Activated CD8-positive, alpha-beta memory T cell treated with anti-CD3 and anti-CD28 coated beads, Interleukin-2, amount 10 ng/mL, durations not matched to agents 7 days and 5 days (primary cell): ENCODE measurements at regions of chr5 and their contacts with region 1.

Region 1: DNA sequence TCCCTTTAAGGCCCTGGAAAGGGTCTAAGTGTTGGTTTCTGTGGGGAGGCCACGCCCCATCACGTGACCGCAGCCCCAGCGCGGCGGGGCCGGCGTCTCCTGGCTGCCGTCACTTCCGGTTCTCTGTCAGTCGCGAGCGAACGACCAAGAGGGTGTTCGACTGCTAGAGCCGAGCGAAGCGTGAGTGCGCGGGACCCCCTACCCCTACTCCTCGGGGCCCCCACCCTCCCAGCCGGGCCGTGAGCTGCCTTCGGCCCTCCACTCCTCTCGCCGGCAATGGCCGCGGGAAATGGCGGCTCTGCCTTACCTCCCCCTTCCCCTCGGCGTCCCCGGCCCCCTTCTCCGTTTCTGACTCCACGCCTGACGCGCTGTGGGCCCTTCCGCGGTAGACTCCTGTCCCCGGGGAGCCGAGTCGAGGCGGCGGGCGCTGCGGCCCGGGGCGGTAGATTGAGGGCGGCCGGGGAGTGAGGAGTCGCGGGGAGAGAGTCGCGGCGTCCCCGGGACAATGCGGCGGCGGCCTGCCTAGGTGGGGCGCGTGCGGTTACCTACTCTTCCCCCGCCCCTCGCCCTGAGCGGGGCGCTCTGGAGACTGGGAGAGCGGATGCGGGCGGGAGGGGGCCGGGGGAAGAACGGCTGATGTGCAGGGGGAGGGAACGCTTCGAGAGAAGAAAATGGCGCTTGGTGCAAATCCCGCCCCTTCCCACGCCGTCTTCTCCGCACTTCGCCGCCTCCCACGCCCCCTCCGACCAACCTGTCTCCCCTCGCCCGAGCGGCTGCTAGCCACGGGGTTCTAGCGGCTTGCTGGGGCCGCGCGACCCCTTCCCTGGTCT is at the start of gene SUB1:
- DNase-seq: peak; percentile 96
- ATAC-seq: peak; percentile 87
- H3K4me3 Mint-ChIP-seq: peak within 1 kb of the TSS; percentile 100
- H3K27ac Mint-ChIP-seq: peak within 1 kb of the TSS; percentile 96
- H3K4me1 Mint-ChIP-seq: peaks cover 70% of the 10 kb centered on the region
- H3K27me3 Mint-ChIP-seq: no peaks in the 10 kb centered on the region
- total RNA-seq, gene SUB1: 525 to 528 TPM

Region 2: GRCh38 chr5:32232441-32233219 is 353.0 kb before region 1 on chr5:
- CTCF ChIA-PET with region 1: interaction called, 11 read pairs
- DNase-seq: peak; percentile 83
- ATAC-seq: peak; percentile 90
- H3K4me3 Mint-ChIP-seq: no peak overlapping the region
- H3K27ac Mint-ChIP-seq: peak overlapping the region; percentile 53
- H3K4me1 Mint-ChIP-seq: peaks cover 3% of the 10 kb centered on the region
- H3K27me3 Mint-ChIP-seq: no peaks in the 10 kb centered on the region

Region 3: DNA sequence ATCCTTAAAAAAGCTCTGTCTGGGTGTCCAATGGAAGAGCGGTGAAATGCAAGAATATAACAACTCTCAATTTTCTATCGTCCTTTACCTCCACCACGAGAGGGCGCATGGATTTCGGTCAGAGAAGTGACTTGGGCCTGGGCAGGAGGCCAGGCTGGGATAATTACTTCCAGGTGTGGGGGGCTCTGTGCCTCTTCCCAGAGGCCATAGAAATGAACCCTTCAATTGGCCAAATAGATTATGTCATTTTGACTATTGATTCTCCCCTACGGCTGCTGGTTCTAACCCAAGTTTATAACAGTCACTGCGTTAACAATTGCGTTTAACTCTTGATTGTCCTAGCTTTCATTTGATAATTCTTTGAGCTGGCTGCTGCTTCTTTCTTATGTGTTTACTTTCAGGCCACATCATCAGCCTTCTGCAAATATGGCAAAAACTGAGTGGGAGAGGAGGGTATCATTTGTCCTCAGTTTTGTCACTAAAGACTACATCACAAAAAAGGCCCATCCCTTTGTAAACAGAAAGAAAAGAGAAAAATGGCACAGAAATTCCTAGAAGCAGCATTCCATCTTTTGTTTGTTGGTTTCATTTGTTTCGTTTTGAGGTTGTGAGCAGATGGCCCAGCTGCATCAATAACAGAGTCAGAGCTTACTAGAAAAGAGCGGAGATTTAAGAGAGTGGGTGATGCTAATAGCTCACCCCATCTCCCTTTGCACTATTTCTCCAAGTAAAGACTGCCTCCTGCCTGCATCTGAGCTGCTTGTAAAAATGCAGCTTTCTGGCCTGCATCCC is 95.7 kb before region 1 on chr5:
- CTCF ChIA-PET with region 1: interaction called, 149 read pairs
- DNase-seq: peak; percentile 79
- ATAC-seq: peak; percentile 64
- H3K4me3 Mint-ChIP-seq: no peak overlapping the region
- H3K27ac Mint-ChIP-seq: no peak overlapping the region
- H3K4me1 Mint-ChIP-seq: peaks cover 2% of the 10 kb centered on the region
- H3K27me3 Mint-ChIP-seq: no peaks in the 10 kb centered on the region

Region 4: DNA sequence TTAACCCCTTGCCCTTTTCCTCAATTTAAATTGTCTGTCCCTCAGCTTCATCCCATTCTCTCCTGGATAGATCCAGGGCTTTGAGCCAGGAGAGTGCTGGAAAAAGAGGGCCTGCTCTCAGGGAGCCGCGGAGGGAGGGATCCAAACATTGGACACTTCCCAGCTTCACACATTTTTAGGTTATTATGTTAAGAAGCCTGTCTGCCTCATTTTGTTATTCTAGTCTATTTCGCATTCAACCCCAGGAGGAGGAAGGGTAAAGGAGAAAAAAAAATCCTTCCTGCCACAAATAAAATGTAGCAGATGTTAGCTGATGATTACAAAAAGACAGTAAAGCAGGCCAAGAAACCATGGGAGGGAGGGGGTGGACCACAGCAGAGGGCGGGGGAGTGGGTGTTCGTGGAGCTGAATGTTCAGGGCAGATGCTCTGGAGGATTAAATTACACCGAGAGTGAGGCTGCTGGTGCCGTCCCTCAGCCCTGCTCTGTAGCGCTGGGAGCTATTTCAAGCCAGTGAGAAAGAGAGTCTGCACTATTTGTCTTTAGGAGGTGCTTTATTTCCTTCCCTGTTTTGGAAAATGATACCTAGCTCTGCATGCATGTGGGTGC is 80.6 kb before region 1 on chr5:
- CTCF ChIA-PET with region 1: interaction called, 12 read pairs
- DNase-seq: no peak
- ATAC-seq: no peak
- H3K4me3 Mint-ChIP-seq: no peak overlapping the region
- H3K27ac Mint-ChIP-seq: no peak overlapping the region
- H3K4me1 Mint-ChIP-seq: peaks cover 4% of the 10 kb centered on the region
- H3K27me3 Mint-ChIP-seq: peaks cover 20% of the 10 kb centered on the region

Region 5: DNA sequence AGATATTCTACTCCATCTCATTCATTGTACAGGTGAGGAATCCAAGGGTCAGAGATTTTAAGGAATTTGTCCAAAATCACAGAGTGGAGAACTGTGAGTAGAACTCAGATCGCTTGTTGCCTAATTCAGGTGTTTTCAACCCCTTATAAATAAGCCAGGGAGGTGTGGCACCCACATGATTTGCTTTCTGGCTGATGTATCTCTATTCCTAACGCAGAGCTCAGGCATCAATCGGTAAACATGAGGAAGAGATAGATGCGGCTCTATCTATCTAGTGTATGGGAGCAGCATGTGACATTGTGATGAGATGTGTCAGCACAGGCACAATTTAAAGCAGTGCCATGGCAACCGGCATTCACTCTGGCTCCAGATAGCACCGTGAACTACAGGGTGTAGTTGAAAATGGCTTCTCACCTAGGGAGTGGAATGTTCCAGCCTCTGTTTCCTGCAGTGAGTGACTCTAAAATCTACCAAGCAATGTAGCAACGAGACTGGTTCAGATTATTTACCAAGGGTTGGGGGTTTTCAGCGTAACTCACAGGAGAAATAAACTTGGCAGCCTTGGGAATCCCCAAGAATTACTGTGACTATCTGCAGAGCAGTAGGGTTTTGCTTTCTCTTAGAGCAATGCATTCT is 53.7 kb before region 1 on chr5:
- CTCF ChIA-PET with region 1: interaction called, 41 read pairs
- DNase-seq: peak; percentile 81
- ATAC-seq: peak; percentile 89
- H3K4me3 Mint-ChIP-seq: peak overlapping the region; percentile 82
- H3K27ac Mint-ChIP-seq: peak overlapping the region; percentile 86
- H3K4me1 Mint-ChIP-seq: peaks cover 61% of the 10 kb centered on the region
- H3K27me3 Mint-ChIP-seq: no peaks in the 10 kb centered on the region

Region 6: DNA sequence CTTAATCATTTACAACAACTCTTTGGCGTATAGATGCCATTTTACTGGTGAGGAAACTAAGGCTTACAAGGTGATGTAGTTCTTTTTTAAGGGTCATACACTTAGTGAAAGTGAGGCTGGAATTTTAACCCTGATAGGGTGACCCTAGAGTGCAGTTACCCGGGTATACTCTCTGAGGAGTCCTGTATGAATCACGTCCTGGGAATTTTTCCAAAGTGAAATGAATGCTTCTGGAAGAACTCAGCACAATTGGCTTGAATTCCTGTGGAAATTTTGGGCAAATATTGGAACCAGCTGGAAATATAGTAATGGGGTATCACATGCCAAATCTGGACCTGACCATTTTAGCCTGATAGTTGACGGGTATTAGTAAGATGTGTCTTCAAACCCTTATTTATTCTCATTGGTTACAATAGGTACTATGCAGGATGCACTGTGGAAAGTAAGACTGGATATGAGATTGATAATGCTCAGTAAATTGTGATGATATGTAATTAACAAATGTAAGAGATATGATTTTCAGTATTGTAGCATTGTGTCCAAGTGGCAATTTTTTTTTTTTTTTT is 14.5 kb after region 1 on chr5:
- CTCF ChIA-PET with region 1: interaction called, 16 read pairs
- DNase-seq: no peak
- ATAC-seq: no peak
- H3K4me3 Mint-ChIP-seq: no peak overlapping the region
- H3K27ac Mint-ChIP-seq: no peak overlapping the region
- H3K4me1 Mint-ChIP-seq: peaks cover 50% of the 10 kb centered on the region
- H3K27me3 Mint-ChIP-seq: no peaks in the 10 kb centered on the region